Psoas muscle (tissue), 8 donors: ENCODE measurements at regions of chr18 and their contacts with region 1.

Region 1: GRCh38 chr18:12744103-12744502 is 41.3 kb downstream of the PSMG2 start:
- DNase-seq: no peak
- ATAC-seq: peak in 2 of 4 donors; percentile 56 to 62
- H3K4me3 ChIP-seq: no peak overlapping the region
- H3K27ac ChIP-seq: no peak overlapping the region
- H3K4me1 ChIP-seq: no peaks in the 10 kb centered on the region
- H3K27me3 ChIP-seq: no peaks in the 10 kb centered on the region
- CTCF ChIP-seq: peak; percentile 54

Region 2: DNA sequence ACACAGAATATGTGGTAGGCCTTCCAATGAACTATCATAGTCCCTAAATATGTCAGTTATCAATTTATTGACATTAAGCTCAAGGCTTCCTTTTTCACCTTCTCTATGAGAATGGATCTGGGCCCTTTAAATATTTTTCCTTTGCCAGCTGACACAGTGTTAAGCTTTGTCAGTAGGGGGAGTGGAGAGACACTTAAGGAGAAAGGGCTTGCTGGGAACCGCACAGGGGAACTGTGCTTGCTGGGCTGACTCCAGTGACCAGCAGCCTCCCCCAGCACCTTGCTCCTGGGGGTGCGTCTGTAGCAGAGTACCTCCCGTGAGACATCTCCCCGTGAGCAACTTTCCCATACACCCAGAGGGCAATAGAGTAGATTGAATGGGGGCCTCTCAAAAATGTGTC is 146.4 kb after region 1 on chr18:
- intact Hi-C with region 1: loop called in 1 of 2 experiments (anchors 10 kb)
- DNase-seq: no peak
- ATAC-seq: no peak
- H3K4me3 ChIP-seq: no peak overlapping the region
- H3K27ac ChIP-seq: no peak overlapping the region
- H3K4me1 ChIP-seq: no peaks in the 10 kb centered on the region
- H3K27me3 ChIP-seq: peaks cover 0 to 15% (median 1%) of the 10 kb centered on the region in 3 donors
- CTCF ChIP-seq: no peak